HEK293 (cell line): ENCODE measurements at regions of chr17 and their contacts with region 1.

Region 1: GRCh38 chr17:77088455-77089123 is 52.2 kb upstream of the SEC14L1 start:
- H3K4me3 ChIP-seq: peak overlapping the region; percentile 81
- H3K27ac ChIP-seq: peak overlapping the region; percentile 81
- H3K4me1 ChIP-seq: peaks cover 2% of the 10 kb centered on the region
- CTCF ChIP-seq: peak; percentile 98

Region 2: GRCh38 chr17:77098884-77099545 is 10.4 kb after region 1 on chr17:
- CTCF ChIA-PET with region 1: interaction called, 10 read pairs
- POLR2A ChIA-PET with region 1: interaction called, 3 read pairs
- H3K4me3 ChIP-seq: no peak overlapping the region
- H3K27ac ChIP-seq: no peak overlapping the region
- H3K4me1 ChIP-seq: no peaks in the 10 kb centered on the region
- CTCF ChIP-seq: no peak

Region 3: GRCh38 chr17:77140166-77140878 is 51.7 kb after region 1 on chr17:
- CTCF ChIA-PET with region 1: interaction called, 4 read pairs
- POLR2A ChIA-PET with region 1: interaction called, 22 read pairs
- H3K4me3 ChIP-seq: peak overlapping the region; percentile 97
- H3K27ac ChIP-seq: peak overlapping the region; percentile 95
- H3K4me1 ChIP-seq: peaks cover 3% of the 10 kb centered on the region
- CTCF ChIP-seq: peak; percentile 24; the same call in 1 of the 2 replicates

Region 4: DNA sequence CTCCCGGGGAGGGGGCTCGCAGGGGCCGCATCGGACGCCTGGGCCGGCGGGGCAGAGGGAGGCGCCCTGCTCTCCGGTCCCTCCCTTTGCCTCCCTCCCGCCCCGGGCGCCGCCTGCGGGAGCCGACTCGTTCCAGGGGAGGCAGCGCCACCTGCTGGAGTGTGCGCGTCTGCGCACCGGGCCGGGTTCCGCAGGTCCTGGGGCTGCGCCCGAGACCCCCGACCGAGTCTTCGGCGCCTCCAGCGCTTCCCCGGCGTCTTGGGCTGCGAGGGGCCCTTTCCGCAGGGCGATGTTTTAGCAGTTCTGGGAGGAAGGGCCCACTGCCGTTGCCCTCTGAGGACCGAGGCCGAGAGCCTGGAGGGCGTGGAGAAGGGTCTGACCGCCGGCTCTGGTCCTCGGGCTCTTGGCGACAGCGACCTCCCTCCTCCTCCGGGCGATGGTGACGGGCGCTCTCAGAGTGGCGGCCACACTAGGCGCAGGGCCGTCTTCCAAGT is 158.5 kb after region 1 on chr17:
- CTCF ChIA-PET with region 1: interaction called, 26 read pairs
- POLR2A ChIA-PET with region 1: interaction called, 4 read pairs
- H3K4me3 ChIP-seq: peak overlapping the region; percentile 30
- H3K27ac ChIP-seq: no peak overlapping the region; the same call in 1 of the 2 replicates
- H3K4me1 ChIP-seq: 0 out of 2 replicates have a peak, but pooled peaks cover 2% of the 10 kb centered on the region
- CTCF ChIP-seq: peak; percentile 97